ENCODE measurements at regions of chr1 and their contacts with region 1.

Region 1: GRCh38 chr1:235802947-235803346 is 63.8 kb downstream of the LYST start:
- DNase-seq: no peak
- H3K4me3 Mint-ChIP-seq: no peak overlapping the region
- H3K27ac Mint-ChIP-seq: no peak overlapping the region
- H3K4me1 Mint-ChIP-seq: peaks cover 4% of the 10 kb centered on the region
- H3K27me3 Mint-ChIP-seq: no peaks in the 10 kb centered on the region

Region 2: DNA sequence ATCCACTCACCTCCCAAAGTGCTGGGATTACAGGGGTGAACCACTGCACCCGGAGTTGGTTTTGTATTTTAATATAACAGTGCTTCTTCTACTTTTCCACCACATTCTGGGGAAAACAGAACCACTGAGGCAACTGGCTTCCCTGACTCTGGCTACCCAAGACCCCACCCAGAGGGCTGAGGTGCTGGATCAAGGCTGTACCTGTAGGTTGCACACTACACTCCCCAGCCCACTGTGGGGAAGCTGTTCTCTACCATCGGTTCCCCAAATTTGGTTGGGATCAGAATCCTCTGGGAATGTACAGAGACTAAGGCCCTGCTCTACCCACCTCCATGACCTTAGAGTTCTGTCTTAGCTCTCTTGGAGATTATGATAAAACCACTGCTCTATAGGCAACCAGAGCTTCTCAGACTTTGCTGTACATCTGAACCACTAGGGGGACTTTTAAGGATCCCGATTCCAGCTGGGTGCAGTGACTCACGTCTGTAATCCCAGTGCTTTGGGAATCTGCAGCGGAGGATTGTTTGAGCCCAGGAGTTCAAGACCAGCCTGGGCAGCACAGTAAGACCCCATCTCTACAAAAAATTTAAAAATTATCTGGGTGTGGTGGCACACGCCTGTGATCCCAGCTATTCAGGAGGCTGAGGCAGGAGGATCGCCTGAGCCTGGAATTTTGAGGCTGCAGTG is 204.9 kb before region 1 on chr1:
- intact Hi-C with region 1: no loop called
- DNase-seq: no peak
- H3K4me3 Mint-ChIP-seq: no peak overlapping the region
- H3K27ac Mint-ChIP-seq: no peak overlapping the region
- H3K4me1 Mint-ChIP-seq: peaks cover 8% of the 10 kb centered on the region
- H3K27me3 Mint-ChIP-seq: peaks cover 3% of the 10 kb centered on the region

Region 3: GRCh38 chr1:235843461-235843961 is 40.6 kb after region 1 on chr1:
- intact Hi-C with region 1: loop called (anchors 5 kb)
- DNase-seq: no peak
- H3K4me3 Mint-ChIP-seq: no peak overlapping the region
- H3K27ac Mint-ChIP-seq: no peak overlapping the region
- H3K4me1 Mint-ChIP-seq: peaks cover 55% of the 10 kb centered on the region
- H3K27me3 Mint-ChIP-seq: no peaks in the 10 kb centered on the region